HEK293T (cell line): ENCODE measurements at regions of chr19 and their contacts with region 1.

Region 1: DNA sequence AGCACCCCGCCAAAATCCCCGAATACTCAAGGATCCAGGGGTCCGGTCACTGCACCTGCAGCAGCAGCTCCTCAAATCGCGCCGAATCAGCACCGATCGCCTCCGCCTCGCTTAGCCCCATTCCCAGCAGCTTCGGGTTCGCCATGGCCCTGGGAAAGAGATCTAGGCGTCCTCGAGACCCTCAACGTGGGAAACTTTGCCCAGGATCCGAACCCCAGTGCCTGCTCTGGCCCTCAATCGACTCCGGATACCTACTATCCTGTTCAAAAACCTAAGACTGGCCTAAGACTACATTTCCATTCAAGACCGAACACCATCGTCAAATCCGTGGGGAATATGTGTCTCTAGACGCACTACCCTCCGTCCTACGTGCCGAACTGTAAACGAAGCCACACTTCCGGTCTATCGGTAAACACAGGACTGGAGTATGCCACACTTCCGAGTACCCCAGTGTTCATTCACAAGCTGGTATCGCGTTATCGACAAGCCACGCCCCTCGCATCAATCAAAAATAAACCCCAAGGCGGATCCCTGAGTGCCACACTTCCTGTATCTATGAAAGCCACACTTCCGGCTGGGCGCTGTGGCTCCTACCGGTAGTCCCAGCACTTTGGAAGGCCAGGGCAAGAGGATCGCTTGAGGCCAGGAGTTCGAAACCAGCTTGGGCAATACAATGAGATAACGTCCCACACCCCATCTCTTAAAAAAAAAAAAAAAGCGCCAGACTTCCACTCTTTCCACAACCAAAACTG is at the start of gene PIH1D1:
- DNase-seq: peak; percentile 89

Region 2: DNA sequence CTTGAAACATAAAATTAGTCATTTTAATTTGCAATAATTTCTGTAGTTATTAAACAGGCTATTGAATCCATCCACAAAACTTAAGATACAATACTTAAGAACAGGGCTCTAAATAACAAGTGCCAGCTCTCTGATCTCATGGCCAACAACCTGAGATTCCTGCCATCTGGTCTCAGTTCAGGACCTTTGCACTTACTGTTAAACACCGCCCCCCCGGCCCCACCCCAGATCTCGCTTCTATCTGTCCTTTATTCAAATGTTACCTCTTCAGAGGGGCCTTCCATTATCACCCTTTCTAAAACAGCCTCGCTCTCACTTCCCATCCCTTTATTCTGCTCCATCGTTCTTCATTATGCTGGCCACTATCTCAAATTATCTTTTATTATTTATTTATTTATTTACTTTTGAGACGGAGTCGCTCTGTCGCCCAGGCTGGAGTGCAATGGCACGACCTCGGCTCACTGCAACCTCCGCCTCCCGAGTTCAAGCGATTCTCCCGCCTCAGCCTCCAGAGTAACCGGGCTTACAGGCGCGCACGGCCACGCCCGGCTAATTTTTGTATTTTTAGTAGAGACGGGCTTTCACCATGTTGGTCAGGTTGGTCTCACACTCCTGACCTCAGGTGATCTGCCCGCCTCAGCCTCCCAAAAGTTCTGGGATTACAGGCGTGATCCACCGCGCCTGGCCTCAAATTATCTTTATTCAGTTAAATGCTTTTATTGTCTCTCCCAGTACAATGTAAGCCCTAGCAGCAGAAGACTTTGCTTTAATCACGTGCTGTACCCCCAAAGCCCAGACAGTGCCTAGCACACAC is 367.2 kb before region 1 on chr19:
- CTCF ChIA-PET with region 1: no interaction called
- POLR2A ChIA-PET with region 1: no interaction called
- DNase-seq: no peak

Region 3: GRCh38 chr19:49347846-49348245 is 103.8 kb before region 1 on chr19:
- CTCF ChIA-PET with region 1: no interaction called
- POLR2A ChIA-PET with region 1: no interaction called
- DNase-seq: peak; percentile 58

Region 4: GRCh38 chr19:49403404-49404187 is 48.0 kb before region 1 on chr19:
- CTCF ChIA-PET with region 1: no interaction called
- POLR2A ChIA-PET with region 1: interaction called, 11 read pairs
- DNase-seq: peak; percentile 69

Region 5: DNA sequence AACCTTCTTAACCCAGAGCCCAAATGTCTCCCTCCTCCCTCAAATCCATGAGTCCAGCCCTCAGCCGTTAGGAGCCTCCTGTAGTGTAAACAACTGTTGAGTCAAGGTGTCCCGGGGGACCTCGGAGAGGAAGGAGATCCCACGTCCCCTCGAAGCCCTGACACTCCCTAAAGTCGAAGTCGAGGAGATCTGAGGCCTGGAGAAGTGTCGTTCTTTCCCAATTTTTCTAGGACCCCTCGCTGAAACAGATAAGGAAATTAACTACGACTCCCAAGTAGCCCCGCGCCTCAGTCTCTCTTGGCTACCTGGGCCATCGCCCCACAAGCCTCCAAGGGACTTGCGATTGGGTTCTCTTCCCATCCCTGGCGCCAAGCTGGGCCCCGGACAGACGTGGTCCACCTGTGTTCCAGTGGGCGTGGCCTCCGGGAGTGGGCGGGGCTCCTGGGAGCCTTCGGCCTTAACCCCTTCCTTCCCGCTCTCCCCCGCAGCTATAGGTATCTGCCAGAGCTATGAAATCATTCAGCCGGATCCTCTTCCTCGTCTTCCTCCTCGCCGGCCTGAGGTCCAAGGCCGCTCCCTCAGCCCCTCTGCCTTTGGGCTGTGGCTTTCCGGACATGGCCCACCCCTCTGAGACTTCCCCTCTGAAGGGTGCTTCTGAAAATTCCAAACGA is 25.5 kb before region 1 on chr19:
- CTCF ChIA-PET with region 1: no interaction called
- POLR2A ChIA-PET with region 1: interaction called, 11 read pairs
- DNase-seq: peak; percentile 66

Region 6: DNA sequence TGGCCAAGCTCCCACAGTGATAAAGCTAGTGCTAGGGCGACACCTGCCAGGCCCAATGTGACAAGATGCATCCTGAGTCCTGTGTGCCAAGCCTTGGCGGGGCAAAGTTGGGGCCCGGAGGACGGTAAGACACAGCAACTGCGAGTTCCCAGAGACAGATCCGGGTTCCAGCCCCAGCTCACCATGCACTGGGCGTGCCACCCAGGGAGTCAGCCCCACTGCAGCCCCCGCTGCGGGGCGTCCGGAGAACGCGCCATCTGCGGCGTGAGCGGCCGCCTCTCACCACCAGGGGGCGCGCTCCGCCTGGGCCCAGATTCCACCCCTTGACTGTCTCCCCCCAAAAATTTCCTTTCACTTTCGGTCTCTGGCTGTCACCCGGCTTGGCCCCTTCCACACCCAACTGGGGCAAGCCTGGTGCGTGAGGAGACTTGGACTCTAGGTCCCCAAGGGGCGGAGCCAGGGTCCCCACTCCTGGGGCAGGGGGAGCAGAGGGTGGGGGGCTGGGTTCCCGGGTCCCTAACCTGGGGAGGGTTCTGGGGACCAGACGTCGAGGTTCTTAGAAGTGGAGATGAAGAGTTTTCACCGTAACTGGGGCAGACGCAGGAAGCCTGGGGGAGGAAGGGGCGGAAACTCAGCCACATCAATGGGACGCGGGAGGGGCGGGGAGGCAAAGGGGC is 22.4 kb after region 1 on chr19 and contains the start of gene FLT3LG:
- CTCF ChIA-PET with region 1: interaction called, 6 read pairs
- POLR2A ChIA-PET with region 1: interaction called, 25 read pairs
- DNase-seq: peak; percentile 80